Naive thymus-derived CD4-positive, alpha-beta T cell (primary cell): ENCODE measurements at regions of chr14 and their contacts with region 1.

Region 1: DNA sequence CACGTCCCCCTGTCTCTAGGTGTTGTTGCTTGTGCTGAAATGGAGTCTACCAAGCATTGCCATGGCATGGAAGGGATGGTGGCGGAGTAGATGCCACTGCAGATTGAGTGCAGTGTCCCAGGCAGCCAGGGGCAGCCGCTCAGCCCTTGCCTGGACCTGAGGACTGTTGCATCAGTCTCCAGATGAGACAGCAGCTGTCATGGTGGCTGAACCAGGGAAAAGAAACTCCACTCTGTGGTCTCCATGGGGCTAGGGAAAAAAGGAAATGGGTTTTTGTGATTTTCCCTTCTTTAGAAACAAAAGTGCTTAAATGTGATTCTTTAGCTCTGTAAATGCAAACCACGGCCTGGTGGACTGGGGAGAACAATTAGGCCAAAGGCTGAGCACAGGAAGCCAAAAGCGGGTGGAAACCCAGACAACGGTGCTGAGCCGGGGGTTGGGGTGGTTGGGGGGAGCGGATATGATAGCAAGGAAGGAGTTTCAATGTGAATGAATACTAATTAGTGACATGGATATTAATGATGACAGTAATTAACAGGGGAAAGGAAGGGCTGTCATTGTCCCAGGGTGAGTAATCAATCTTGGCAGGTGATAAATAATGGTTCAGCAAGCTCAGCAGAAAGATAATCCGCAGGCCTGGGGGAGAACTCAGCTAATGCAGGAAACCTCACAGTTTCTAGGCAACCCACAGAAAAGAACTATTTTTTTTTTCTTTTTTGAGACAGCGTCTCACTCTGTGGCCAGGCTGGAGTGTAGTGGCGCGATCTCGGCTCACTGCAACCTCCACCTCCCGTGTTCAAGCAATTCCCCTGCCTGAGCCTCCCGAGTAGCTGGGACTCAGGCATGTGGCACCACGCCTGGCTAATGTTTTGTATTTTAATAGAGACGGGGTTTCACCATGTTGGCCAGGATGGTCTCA is 442.6 kb downstream of the DPF3 start:
- DNase-seq: peak in 4 of 9 donors; percentile 6 to 30 (median 15)
- ATAC-seq: peak; percentile 80
- H3K4me3 ChIP-seq: peak overlapping the region; percentile 15
- H3K4me3 Mint-ChIP-seq: peak overlapping the region; percentile 25 to 82 (median 76)
- H3K27ac ChIP-seq: no peak overlapping the region
- H3K27ac Mint-ChIP-seq: peak overlapping the region in 8 of 9 donors; percentile 3 to 93 (median 68)
- H3K4me1 ChIP-seq: peaks cover 15 to 17% of the 10 kb centered on the region in 2 donors
- H3K4me1 Mint-ChIP-seq: peaks cover 21 to 71% (median 26%) of the 10 kb centered on the region in 7 donors
- H3K27me3 ChIP-seq: no peaks in the 10 kb centered on the region
- H3K27me3 Mint-ChIP-seq: peaks cover 0 to 4% (median 0%) of the 10 kb centered on the region in 5 donors

Region 2: DNA sequence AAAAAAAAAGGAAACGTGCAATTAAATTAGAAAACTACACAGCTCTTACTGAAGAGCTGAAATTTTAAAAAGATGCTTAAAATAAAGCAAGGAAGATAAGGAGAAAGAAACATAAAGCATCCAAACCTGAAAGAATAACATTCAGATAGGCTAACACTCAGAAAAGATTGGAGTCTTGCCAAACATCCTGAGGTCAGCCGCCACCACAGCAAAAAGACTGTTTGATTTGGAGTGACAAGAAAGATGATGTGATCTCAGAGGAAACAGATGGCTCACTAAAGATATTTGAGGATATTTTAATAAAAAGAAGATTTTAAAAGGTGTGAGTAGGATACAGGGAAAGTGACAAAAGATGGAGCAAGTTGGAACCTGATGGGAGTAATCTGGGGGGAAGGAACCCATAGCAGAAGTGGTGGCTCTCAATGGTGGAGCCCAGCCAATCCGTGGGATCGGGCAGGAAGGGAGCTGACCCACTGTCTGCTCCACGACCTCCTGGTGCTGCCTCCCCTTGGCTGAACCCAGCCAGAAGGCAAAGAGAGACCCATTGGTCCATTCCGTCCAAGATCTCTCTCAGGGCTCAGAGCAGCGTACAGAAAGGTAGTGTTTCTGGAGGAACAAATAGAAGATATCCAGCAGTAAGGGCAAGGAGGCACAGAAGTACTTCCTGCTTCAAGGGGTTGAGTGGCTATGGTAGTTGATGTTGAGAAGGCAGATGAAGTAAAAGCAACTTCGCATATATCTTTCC is 49.5 kb before region 1 on chr14:
- CTCF ChIA-PET with region 1: no interaction called
- POLR2A ChIA-PET with region 1: no interaction called
- intact Hi-C with region 1: loop called in 1 of 2 experiments (anchors 2 kb)
- DNase-seq: peak in 7 of 9 donors; percentile 15 to 63 (median 29)
- ATAC-seq: peak; percentile 29
- H3K4me3 ChIP-seq: no peak overlapping the region
- H3K4me3 Mint-ChIP-seq: peak overlapping the region in 6 of 10 donors; percentile 11 to 66 (median 34)
- H3K27ac ChIP-seq: no peak overlapping the region
- H3K27ac Mint-ChIP-seq: peak overlapping the region in 1 of 9 donors; percentile 50
- H3K4me1 ChIP-seq: peaks cover 0 to 10% of the 10 kb centered on the region in 2 donors
- H3K4me1 Mint-ChIP-seq: peaks cover 9 to 17% (median 14%) of the 10 kb centered on the region in 7 donors
- H3K27me3 ChIP-seq: no peaks in the 10 kb centered on the region
- H3K27me3 Mint-ChIP-seq: peaks cover 39 to 70% (median 54%) of the 10 kb centered on the region in 5 donors

Region 3: GRCh38 chr14:72439707-72440106 is 11.6 kb before region 1 on chr14:
- CTCF ChIA-PET with region 1: no interaction called
- POLR2A ChIA-PET with region 1: no interaction called
- intact Hi-C with region 1: loop called in 1 of 2 experiments (anchors 1 kb)
- DNase-seq: peak in 1 of 9 donors; percentile 44
- ATAC-seq: peak; percentile 33
- H3K4me3 ChIP-seq: no peak overlapping the region
- H3K4me3 Mint-ChIP-seq: peak overlapping the region in 7 of 10 donors; percentile 12 to 83 (median 36)
- H3K27ac ChIP-seq: no peak overlapping the region
- H3K27ac Mint-ChIP-seq: peak overlapping the region in 8 of 9 donors; percentile 9 to 83 (median 42)
- H3K4me1 ChIP-seq: peaks cover 16 to 26% of the 10 kb centered on the region in 2 donors
- H3K4me1 Mint-ChIP-seq: peaks cover 38 to 93% (median 50%) of the 10 kb centered on the region in 7 donors
- H3K27me3 ChIP-seq: no peaks in the 10 kb centered on the region
- H3K27me3 Mint-ChIP-seq: peaks cover 0 to 5% (median 0%) of the 10 kb centered on the region in 5 donors